ENCODE measurements at regions of chr1 and their contacts with region 1.

Region 1: GRCh38 chr1:161766102-161766981 is at the start of gene ATF6:
- DNase-seq: peak; percentile 72 to 91 (median 82)
- H3K4me3 ChIP-seq: peak within 1 kb of the TSS; percentile 59 to 100 (median 89)
- H3K27ac ChIP-seq: peak within 1 kb of the TSS; percentile 6 to 93 (median 79)
- H3K27me3 ChIP-seq: no peaks in the 10 kb centered on the region
- CTCF ChIP-seq: peak in 25 of 56 donors; percentile 10 to 49 (median 26)
- total RNA-seq, gene ATF6: 21.6 to 31.4 (median 25.8) TPM

Region 2: DNA sequence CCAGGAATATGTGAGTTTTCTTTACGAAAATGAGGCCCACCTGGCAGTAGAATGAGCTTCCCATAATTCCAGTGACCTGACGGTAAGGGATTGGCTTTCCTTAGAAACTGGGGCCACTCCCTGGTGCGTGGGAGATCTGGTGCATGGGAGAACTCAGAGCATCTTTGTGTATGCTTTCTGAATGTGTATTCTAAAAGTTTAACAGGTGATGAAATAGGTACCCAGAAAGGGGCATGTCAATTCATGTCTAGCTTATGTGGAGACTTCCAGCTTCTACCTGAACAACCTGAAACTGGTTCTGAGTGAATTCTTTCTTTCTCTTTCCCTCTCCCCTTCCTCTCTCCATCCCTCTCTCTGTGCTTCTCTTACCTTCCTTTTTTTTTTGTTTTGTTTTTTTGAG is 74.5 kb before region 1 on chr1:
- intact Hi-C with region 1: no loop called
- DNase-seq: no peak
- H3K4me3 ChIP-seq: no peak overlapping the region
- H3K27ac ChIP-seq: no peak overlapping the region
- H3K27me3 ChIP-seq: peaks cover 0 to 46% (median 7%) of the 10 kb centered on the region in 45 donors
- CTCF ChIP-seq: no peak

Region 3: GRCh38 chr1:161749509-161750407 is 16.6 kb before region 1 on chr1 and contains the start of gene DUSP12:
- intact Hi-C with region 1: loop called in 1 of 2 experiments (anchors 2 kb)
- DNase-seq: peak; percentile 82 to 96 (median 94)
- H3K4me3 ChIP-seq: peak within 1 kb of the TSS; percentile 66 to 100 (median 91)
- H3K27ac ChIP-seq: peak within 1 kb of the TSS; percentile 26 to 98 (median 93)
- H3K27me3 ChIP-seq: no peaks in the 10 kb centered on the region
- CTCF ChIP-seq: peak in 53 of 56 donors; percentile 17 to 67 (median 40)
- total RNA-seq, gene DUSP12: 12.6 to 34.3 (median 21.6) TPM

Region 4: GRCh38 chr1:163321311-163322305 is 1555.3 kb after region 1 on chr1 and contains the start of gene NUF2:
- intact Hi-C with region 1: loop called in 1 of 2 experiments (anchors 5 kb)
- DNase-seq: peak; percentile 93 to 97 (median 96)
- H3K4me3 ChIP-seq: peak within 1 kb of the TSS; percentile 46 to 97 (median 80)
- H3K27ac ChIP-seq: peak within 1 kb of the TSS in 56 of 59 donors; percentile 1 to 87 (median 74)
- H3K27me3 ChIP-seq: no peaks in the 10 kb centered on the region
- CTCF ChIP-seq: peak in 48 of 56 donors; percentile 15 to 69 (median 41)
- total RNA-seq, gene NUF2: 0.23 to 8.2 (median 1.2) TPM in 109 of 120 experiments, not detected in the others

Measured in dorsolateral prefrontal cortex (tissue), 120 donors.